Activated CD4-positive, alpha-beta T cell treated with anti-CD3 and anti-CD28 coated beads for 36 hours (primary cell): ENCODE measurements at regions of chr2 and their contacts with region 1.

Region 1: DNA sequence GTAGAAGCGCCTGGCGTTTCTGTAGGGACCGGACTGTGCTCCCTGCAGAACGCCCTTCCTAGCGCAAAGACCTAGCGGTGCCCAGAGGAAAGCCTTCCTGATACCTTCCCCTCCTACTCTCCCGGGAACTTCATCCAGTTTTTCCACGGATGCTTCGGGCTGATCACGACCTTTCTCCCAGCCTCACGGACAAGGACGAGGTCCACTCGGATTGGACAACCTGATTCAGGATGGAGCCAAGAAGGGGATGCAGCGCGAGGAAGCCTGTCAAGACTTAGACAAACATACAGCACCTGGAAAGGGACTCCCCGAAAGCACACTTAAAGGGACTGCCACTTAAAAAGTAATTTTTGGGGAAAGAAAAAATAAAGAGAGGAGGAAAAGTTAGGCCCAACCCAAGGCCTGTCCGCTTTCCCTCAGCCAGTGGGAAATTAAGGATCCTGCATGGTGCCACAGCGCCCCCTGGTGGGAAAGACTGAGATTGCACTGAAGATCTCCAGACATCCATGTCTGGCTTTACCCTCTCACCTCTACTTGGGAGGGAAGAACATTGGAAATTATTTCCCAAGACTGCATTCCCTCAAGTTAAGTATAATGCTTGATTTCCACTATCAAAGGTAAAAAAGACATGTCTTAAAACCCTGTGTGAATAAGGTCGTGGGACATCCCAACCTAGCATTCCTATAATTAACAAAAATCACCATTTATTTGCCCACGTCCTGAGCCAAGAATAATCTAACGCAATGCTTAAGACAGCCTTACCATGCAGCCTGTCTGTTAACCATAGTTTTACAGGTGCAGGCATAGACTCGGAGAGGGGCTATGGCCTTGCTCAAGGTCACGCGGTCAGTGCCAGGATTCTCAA is 13.4 kb upstream of the COPS8 start:
- DNase-seq: peak; percentile 82
- ATAC-seq: peak; percentile 39
- H3K4me3 Mint-ChIP-seq: no peak overlapping the region
- H3K27ac Mint-ChIP-seq: no peak overlapping the region
- H3K4me1 Mint-ChIP-seq: no peaks in the 10 kb centered on the region
- H3K27me3 Mint-ChIP-seq: no peaks in the 10 kb centered on the region

Region 2: GRCh38 chr2:236343400-236344161 is 728.7 kb before region 1 on chr2:
- CTCF ChIA-PET with region 1: interaction called, 4 read pairs
- POLR2A ChIA-PET with region 1: no interaction called
- intact Hi-C with region 1: loop called in 1 of 2 experiments (anchors 2 kb)
- DNase-seq: peak; percentile 64
- ATAC-seq: peak; percentile 44
- H3K4me3 Mint-ChIP-seq: no peak overlapping the region
- H3K27ac Mint-ChIP-seq: no peak overlapping the region
- H3K4me1 Mint-ChIP-seq: no peaks in the 10 kb centered on the region
- H3K27me3 Mint-ChIP-seq: peaks cover 2% of the 10 kb centered on the region

Region 3: GRCh38 chr2:236402033-236402790 is 670.1 kb before region 1 on chr2:
- CTCF ChIA-PET with region 1: no interaction called
- POLR2A ChIA-PET with region 1: no interaction called
- intact Hi-C with region 1: no loop called
- DNase-seq: no peak
- ATAC-seq: no peak
- H3K4me3 Mint-ChIP-seq: no peak overlapping the region
- H3K27ac Mint-ChIP-seq: no peak overlapping the region
- H3K4me1 Mint-ChIP-seq: no peaks in the 10 kb centered on the region
- H3K27me3 Mint-ChIP-seq: peaks cover 2% of the 10 kb centered on the region

Region 4: GRCh38 chr2:237298151-237299118 is 226.1 kb after region 1 on chr2:
- CTCF ChIA-PET with region 1: no interaction called
- POLR2A ChIA-PET with region 1: no interaction called
- intact Hi-C with region 1: no loop called
- DNase-seq: no peak
- ATAC-seq: no peak
- H3K4me3 Mint-ChIP-seq: no peak overlapping the region
- H3K27ac Mint-ChIP-seq: no peak overlapping the region
- H3K4me1 Mint-ChIP-seq: no peaks in the 10 kb centered on the region
- H3K27me3 Mint-ChIP-seq: peaks cover 21% of the 10 kb centered on the region